ENCODE measurements at regions of chr19 and their contacts with region 1.

Region 1: DNA sequence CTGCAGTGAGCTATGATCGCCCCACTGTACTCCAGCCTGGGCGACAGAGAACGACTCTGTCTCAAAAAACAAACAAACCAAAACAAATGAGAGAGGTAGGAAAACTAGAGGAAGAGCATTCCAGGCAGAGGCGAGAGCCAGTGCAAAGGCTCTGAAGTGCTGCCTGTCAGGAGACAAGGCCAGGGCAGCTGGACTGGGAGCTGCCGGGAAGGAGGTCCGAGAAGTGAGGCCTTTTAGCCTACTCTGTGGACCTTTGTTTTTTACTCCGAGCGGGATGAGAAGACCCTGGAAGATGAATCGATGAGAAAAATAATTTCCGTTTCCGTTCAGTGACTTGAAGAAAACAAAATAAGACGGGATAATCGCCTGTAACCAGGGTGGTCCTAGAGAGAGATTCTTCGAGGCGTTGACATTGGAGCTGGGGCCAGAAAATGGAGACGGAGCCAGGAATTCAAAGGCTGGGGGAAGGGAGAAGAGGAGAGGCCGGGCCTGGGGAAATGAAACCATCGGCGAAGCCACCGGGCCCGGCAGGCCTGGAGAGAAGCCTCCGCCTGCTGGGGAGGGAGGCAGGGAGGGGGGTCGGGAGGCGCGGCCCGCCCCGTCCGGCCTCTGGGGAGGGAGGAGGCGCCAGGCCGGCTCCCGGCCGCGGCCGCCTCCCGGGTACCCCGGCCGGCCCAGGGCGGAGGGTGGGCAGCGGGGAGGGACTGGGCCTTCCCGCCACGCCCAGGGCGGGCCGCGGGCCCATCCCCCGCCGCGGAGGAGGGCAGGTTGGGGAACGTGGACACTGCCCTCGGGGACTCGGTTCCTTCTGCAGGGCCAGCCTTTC is 7.8 kb upstream of the SERTAD1 start:
- DNase-seq: peak; percentile 75 to 96
- H3K4me3 ChIP-seq: peak overlapping the region; percentile 63
- H3K27ac ChIP-seq: peak overlapping the region; percentile 89
- H3K4me1 ChIP-seq: peaks cover 29% of the 10 kb centered on the region
- H3K27me3 ChIP-seq: no peaks in the 10 kb centered on the region
- CTCF ChIP-seq: no peak

Region 2: GRCh38 chr19:39403331-39404312 is 1030.0 kb before region 1 on chr19:
- CTCF ChIA-PET with region 1: no interaction called
- POLR2A ChIA-PET with region 1: interaction called, 11 read pairs
- intact Hi-C with region 1: no loop called
- DNase-seq: peak; percentile 93 to 99
- H3K4me3 ChIP-seq: peak overlapping the region; percentile 82
- H3K27ac ChIP-seq: peak overlapping the region; percentile 98
- H3K4me1 ChIP-seq: peaks cover 51% of the 10 kb centered on the region
- H3K27me3 ChIP-seq: no peaks in the 10 kb centered on the region
- CTCF ChIP-seq: no peak

Region 3: DNA sequence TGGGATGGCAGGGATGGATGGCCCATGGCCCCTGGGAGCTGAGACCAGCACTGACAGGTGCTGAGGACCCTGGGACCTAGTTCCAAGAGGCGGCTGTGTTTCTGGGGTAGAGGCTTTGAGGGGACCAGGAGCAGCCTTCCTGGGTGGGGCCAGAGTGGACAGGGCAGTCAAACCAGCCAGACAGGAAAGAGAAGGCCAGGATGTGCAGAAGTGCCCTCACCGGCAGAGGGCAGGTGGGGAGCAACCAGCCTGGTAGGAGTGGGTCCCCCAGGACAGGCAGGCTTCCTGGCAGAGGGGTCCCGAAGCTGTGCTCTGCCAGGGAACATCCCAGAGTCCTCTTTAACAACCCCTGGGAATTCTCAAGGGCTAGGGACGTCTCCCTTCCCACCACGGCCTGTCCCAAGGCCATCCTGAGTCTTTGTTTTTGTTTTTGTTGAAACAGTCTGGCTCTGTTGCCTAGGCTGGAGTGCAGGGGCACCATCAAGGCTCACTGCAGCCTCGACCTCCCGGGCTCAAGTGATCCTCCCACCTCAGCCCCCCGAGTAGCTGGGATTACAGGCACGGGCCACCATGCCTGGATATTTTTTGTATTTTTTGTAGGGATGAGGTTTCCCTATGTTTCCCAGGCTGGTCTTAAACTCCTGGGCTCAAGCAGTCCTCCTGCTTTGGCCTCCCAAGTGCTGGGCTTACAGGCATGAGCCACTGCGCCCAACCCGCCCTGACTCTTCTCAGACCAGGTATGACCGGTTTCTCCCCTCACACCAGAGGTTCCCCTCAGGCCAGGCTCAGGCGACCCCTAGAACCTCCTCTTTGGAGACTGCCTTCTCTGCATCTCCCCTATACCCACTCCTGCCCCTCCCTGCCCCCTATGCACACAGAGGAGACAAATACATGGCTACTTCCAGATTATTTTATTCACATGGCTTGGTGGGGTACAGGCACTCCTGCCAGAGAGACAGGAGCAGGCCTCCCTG is 40.4 kb before region 1 on chr19:
- CTCF ChIA-PET with region 1: interaction called, 18 read pairs
- POLR2A ChIA-PET with region 1: no interaction called
- intact Hi-C with region 1: no loop called
- DNase-seq: peak; percentile 70 to 85
- H3K4me3 ChIP-seq: peak overlapping the region; percentile 40; the same call in 1 of the 2 replicates
- H3K27ac ChIP-seq: peak overlapping the region; percentile 33; the same call in 1 of the 2 replicates
- H3K4me1 ChIP-seq: peaks cover 18% of the 10 kb centered on the region
- H3K27me3 ChIP-seq: no peaks in the 10 kb centered on the region
- CTCF ChIP-seq: peak; percentile 76

Region 4: GRCh38 chr19:40553885-40554857 is 120.6 kb after region 1 on chr19:
- CTCF ChIA-PET with region 1: no interaction called
- POLR2A ChIA-PET with region 1: no interaction called
- intact Hi-C with region 1: no loop called
- DNase-seq: no peak
- H3K4me3 ChIP-seq: no peak overlapping the region
- H3K27ac ChIP-seq: no peak overlapping the region
- H3K4me1 ChIP-seq: no peaks in the 10 kb centered on the region
- H3K27me3 ChIP-seq: peaks cover 38% of the 10 kb centered on the region
- CTCF ChIP-seq: no peak

Measured in PC-9 (cell line).